AG04449 (cell line): ENCODE measurements at regions of chr6 and their contacts with region 1.

Region 1: DNA sequence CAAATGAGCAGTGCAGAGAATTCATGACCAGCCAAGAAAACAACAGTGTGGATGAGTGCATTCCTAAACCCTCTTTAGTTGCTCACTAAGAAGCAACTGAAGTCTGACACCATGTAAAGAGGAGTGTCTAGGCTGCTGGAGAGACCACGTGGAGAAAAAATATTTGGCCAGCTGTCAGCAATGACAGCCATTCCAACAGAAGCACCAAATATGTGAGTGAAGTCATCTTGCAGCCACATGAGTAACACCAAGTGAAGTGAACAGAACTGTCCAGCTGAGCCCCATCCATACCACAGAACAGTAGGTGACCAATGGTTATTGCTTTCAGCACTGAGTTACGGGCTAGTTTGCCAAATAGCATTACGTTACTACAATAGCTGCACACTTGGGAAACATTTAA is 89.4 kb downstream of the TBXT start:
- DNase-seq: peak; percentile 94
- H3K4me3 ChIP-seq: no peak overlapping the region
- CTCF ChIP-seq: no peak

Region 2: DNA sequence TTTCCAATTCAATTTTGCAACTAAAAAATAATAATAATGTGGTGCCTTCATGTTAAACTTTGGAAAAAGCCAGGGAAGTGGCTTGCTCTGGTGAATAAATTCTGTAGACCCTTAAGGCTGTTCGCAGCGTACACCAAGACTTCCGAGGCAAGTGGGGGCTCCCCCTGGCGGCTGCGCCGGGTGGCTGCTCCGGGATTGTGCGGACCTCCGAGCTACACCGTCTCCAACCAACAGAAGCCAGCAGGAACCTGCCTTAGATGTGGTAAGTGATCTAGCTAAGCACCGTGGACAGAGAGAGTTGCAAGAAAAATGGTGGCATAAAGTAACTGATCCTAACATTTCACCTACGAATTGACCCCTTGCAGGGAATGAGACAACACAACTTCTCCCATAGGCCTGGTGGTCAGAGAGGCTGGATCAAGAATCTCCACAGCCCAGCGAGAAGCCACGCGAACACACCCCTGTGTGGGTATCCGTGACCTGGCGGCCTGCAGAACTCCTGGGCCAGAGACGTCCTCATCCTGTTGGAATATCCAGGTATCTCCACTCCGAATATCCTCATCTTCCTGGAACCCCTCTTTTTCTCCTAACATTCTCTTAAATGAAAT is 19.7 kb after region 1 on chr6:
- CTCF ChIA-PET with region 1: interaction called, 15 read pairs
- POLR2A ChIA-PET with region 1: no interaction called
- DNase-seq: peak; percentile 14
- H3K4me3 ChIP-seq: peak overlapping the region; percentile 48
- CTCF ChIP-seq: peak; percentile 95

Region 3: GRCh38 chr6:166488076-166488685 is 409.9 kb after region 1 on chr6:
- CTCF ChIA-PET with region 1: no interaction called
- POLR2A ChIA-PET with region 1: no interaction called
- DNase-seq: no peak
- H3K4me3 ChIP-seq: no peak overlapping the region
- CTCF ChIP-seq: no peak